ENCODE measurements at regions of chr12 and their contacts with region 1.

Region 1: DNA sequence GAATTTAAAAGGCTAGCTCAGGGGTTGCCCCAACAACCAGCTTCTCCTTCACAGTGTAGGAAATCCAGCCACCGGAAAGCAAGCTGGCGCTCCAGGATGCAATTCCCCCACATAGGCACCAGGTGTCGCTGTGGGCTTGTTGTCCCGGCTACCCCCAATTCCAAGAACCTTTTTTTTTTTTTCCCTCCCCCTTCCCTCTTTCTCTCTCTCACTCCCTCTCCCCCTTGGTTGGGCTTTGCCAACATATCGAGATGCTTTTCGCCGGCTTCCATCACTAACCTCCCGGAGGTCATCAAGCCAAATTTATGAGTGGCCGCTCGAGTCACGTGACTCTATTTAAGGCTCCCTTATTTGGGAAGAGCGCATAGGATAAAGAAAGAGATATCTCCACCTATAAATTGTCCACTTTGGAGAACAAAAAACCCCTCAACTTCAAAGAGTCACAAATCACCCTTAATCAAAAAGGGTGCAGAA is at the start of gene HOXC5:
- DNase-seq: no peak
- ATAC-seq: peak; percentile 43
- H3K4me3 ChIP-seq: peak within 1 kb of the TSS; percentile 61
- H3K27ac ChIP-seq: no peak within 1 kb of the TSS
- H3K4me1 ChIP-seq: peaks cover 9% of the 10 kb centered on the region; the same call in 1 of the 2 replicates
- H3K27me3 ChIP-seq: peaks cover 3 to 30% of the 10 kb centered on the region in 2 experiments
- CTCF ChIP-seq: peak; percentile 93 to 96 (median 95)
- EP300 ChIP-seq: 0 out of 4 replicates have a peak, but pooled peaks of 1 of the 2 experiments have one; percentile 37
- POLR2A ChIP-seq: no peak
- RAD21 ChIP-seq: peak; percentile 94
- polyA plus RNA-seq, gene HOXC5: not detected

Region 2: DNA sequence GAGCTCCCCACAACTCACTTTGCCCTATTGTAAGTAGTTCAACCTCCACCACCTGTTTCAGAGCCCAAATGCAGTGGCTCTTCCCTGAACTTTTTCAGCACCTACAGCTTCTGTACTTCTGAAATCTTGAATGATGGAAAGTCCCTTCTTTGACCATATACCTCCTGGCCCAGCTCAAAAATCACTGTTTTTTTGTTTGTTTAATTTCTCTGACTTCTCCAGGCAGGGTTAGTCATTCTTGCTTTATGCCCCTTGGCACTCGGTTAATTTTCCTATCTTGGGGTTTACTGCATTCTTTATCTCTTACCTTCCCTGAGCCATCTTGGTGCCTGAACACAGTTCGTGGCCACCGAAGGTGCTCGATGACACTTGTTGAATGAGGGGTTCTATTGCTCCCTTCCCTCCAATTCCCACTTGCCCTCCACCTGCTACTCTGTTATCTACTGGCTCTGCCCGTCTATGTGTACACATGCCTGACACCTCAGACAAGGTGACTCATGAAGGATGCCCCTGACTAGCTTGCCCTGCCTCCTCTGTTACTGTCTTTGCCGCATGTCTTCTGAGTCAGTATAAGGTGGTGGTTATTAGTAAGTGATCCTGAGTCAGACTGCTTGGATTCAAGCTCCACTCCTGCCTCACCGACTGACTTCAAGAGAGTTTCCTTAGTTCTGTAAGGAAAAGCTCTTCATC is 604.6 kb before region 1 on chr12:
- CTCF ChIA-PET with region 1: no interaction called
- POLR2A ChIA-PET with region 1: no interaction called
- RAD21 ChIA-PET with region 1: no interaction called
- SMC1A ChIA-PET with region 1: no interaction called
- in situ Hi-C with region 1: no loop called
- intact Hi-C with region 1: no loop called
- DNase-seq: no peak
- ATAC-seq: peak; percentile 56
- H3K4me3 ChIP-seq: no peak overlapping the region
- H3K27ac ChIP-seq: no peak overlapping the region
- H3K4me1 ChIP-seq: no peaks in the 10 kb centered on the region
- H3K27me3 ChIP-seq: no peaks in the 10 kb centered on the region
- CTCF ChIP-seq: no peak
- EP300 ChIP-seq: no peak
- POLR2A ChIP-seq: no peak
- RAD21 ChIP-seq: no peak

Region 3: GRCh38 chr12:53984901-53985709 is 47.6 kb before region 1 on chr12 and contains the start of gene HOXC10:
- CTCF ChIA-PET with region 1: interaction called, 11 read pairs
- POLR2A ChIA-PET with region 1: no interaction called
- RAD21 ChIA-PET with region 1: interaction called, 7 read pairs
- SMC1A ChIA-PET with region 1: interaction called, 6 read pairs
- in situ Hi-C with region 1: no loop called
- intact Hi-C with region 1: no loop called
- DNase-seq: peak; percentile 38
- ATAC-seq: peak; percentile 80
- H3K4me3 ChIP-seq: peak within 1 kb of the TSS; percentile 44; the same call in 1 of the 2 replicates
- H3K27ac ChIP-seq: no peak within 1 kb of the TSS
- H3K4me1 ChIP-seq: peaks cover 24% of the 10 kb centered on the region
- H3K27me3 ChIP-seq: peaks cover 30 to 50% of the 10 kb centered on the region in 2 experiments
- CTCF ChIP-seq: peak; percentile 67 to 93 (median 86)
- EP300 ChIP-seq: no peak
- POLR2A ChIP-seq: no peak
- RAD21 ChIP-seq: peak; percentile 77
- polyA plus RNA-seq, gene HOXC10: not detected

Region 4: DNA sequence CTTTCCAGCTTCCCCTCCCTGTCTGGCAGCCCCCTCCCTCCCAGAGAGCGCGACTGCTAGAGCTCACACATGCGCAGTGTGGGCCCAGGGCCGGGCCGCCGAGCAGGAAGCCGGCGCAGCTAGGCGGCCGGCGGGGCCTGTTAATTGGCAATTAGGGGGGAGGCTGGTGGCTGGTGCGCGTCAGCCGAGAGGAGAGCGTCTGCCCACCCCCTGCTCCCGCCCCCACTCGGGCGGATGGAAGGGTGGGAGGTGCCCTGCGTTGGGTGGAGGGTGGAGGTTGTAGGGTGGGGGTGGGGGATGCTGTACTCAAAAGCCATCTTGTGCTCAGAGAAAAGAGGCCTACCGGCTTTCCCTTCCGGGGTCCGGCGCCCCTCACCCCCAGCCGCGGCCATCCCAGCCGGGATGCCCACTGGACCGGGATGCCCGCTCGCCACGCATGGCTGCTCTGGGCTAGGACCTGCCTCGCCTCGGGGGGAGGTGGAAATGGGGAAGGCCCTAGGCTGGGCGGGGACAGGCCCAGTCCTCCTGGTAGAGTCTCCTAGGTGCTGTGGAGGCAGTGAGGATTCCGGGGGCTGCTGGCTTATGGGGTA is 14.7 kb before region 1 on chr12:
- CTCF ChIA-PET with region 1: interaction called, 27 read pairs
- POLR2A ChIA-PET with region 1: interaction called, 12 read pairs
- RAD21 ChIA-PET with region 1: interaction called, 17 read pairs
- SMC1A ChIA-PET with region 1: interaction called, 22 read pairs
- in situ Hi-C with region 1: no loop called
- intact Hi-C with region 1: no loop called
- DNase-seq: peak; percentile 79
- ATAC-seq: peak; percentile 92
- H3K4me3 ChIP-seq: peak overlapping the region; percentile 88
- H3K27ac ChIP-seq: peak overlapping the region; percentile 80
- H3K4me1 ChIP-seq: peaks cover 21% of the 10 kb centered on the region
- H3K27me3 ChIP-seq: peaks cover 8 to 26% of the 10 kb centered on the region in 2 experiments
- CTCF ChIP-seq: no peak
- EP300 ChIP-seq: peak; percentile 36 to 45; a peak in 1 of 4 replicates
- POLR2A ChIP-seq: peak; percentile 79
- RAD21 ChIP-seq: no peak

Region 5: GRCh38 chr12:54134850-54135249 is 102.2 kb after region 1 on chr12:
- CTCF ChIA-PET with region 1: interaction called, 58 read pairs
- POLR2A ChIA-PET with region 1: interaction called, 3 read pairs
- RAD21 ChIA-PET with region 1: interaction called, 61 read pairs
- SMC1A ChIA-PET with region 1: interaction called, 42 read pairs
- in situ Hi-C with region 1: no loop called
- intact Hi-C with region 1: loop called (anchors 2 kb)
- DNase-seq: no peak
- ATAC-seq: peak; percentile 49; the same call in 2 of the 3 replicates
- H3K4me3 ChIP-seq: no peak overlapping the region
- H3K27ac ChIP-seq: no peak overlapping the region
- H3K4me1 ChIP-seq: no peaks in the 10 kb centered on the region
- H3K27me3 ChIP-seq: peaks cover 2 to 10% of the 10 kb centered on the region in 2 experiments; a peak in 3 of 4 replicates
- CTCF ChIP-seq: peak; percentile 22 to 38 (median 34); a peak in 4 of 6 replicates
- EP300 ChIP-seq: no peak
- POLR2A ChIP-seq: no peak
- RAD21 ChIP-seq: peak; percentile 42

Region 6: GRCh38 chr12:54175130-54175963 is 142.7 kb after region 1 on chr12:
- CTCF ChIA-PET with region 1: interaction called, 9 read pairs
- POLR2A ChIA-PET with region 1: no interaction called
- RAD21 ChIA-PET with region 1: interaction called, 6 read pairs
- SMC1A ChIA-PET with region 1: interaction called, 12 read pairs
- in situ Hi-C with region 1: no loop called
- intact Hi-C with region 1: no loop called
- DNase-seq: no peak
- ATAC-seq: peak; percentile 91
- H3K4me3 ChIP-seq: no peak overlapping the region
- H3K27ac ChIP-seq: no peak overlapping the region
- H3K4me1 ChIP-seq: peaks cover 21% of the 10 kb centered on the region
- H3K27me3 ChIP-seq: peaks cover 9 to 12% of the 10 kb centered on the region in 2 experiments
- CTCF ChIP-seq: no peak
- EP300 ChIP-seq: no peak
- POLR2A ChIP-seq: 0 out of 2 replicates have a peak, but pooled peaks have one; percentile 16
- RAD21 ChIP-seq: no peak

Region 7: GRCh38 chr12:54207484-54208294 is 175.0 kb after region 1 on chr12:
- CTCF ChIA-PET with region 1: interaction called, 139 read pairs
- POLR2A ChIA-PET with region 1: interaction called, 3 read pairs
- RAD21 ChIA-PET with region 1: interaction called, 55 read pairs
- SMC1A ChIA-PET with region 1: interaction called, 47 read pairs
- in situ Hi-C with region 1: no loop called
- intact Hi-C with region 1: no loop called
- DNase-seq: no peak
- ATAC-seq: peak; percentile 98
- H3K4me3 ChIP-seq: no peak overlapping the region
- H3K27ac ChIP-seq: no peak overlapping the region
- H3K4me1 ChIP-seq: no peaks in the 10 kb centered on the region
- H3K27me3 ChIP-seq: peaks cover 0 to 2% of the 10 kb centered on the region in 2 experiments; a peak in 3 of 4 replicates
- CTCF ChIP-seq: peak; percentile 93 to 97 (median 97)
- EP300 ChIP-seq: no peak
- POLR2A ChIP-seq: no peak
- RAD21 ChIP-seq: peak; percentile 87

Measured in GM12878 (cell line).